ENCODE measurements at regions of chr19 and their contacts with region 1.

Region 1: GRCh38 chr19:14432791-14433553 is at the start of gene PKN1:
- DNase-seq: peak; percentile 38 to 66
- H3K4me3 ChIP-seq: peak within 1 kb of the TSS; percentile 93
- H3K27ac ChIP-seq: peak within 1 kb of the TSS; percentile 51
- H3K4me1 ChIP-seq: peaks cover 24% of the 10 kb centered on the region
- H3K27me3 ChIP-seq: no peaks in the 10 kb centered on the region; the same call in 1 of the 2 replicates
- CTCF ChIP-seq: no peak
- total RNA-seq, gene PKN1: 257 and 417 TPM in 2 replicates

Region 2: GRCh38 chr19:14556662-14557188 is 123.8 kb after region 1 on chr19:
- CTCF ChIA-PET with region 1: no interaction called
- POLR2A ChIA-PET with region 1: no interaction called
- intact Hi-C with region 1: loop called (anchors 5 kb)
- DNase-seq: peak; percentile 59 to 77
- H3K4me3 ChIP-seq: no peak overlapping the region
- H3K27ac ChIP-seq: 0 out of 2 replicates have a peak overlapping the region, but pooled peaks have one; percentile 1
- H3K4me1 ChIP-seq: 0 out of 2 replicates have a peak, but pooled peaks cover 6% of the 10 kb centered on the region
- H3K27me3 ChIP-seq: no peaks in the 10 kb centered on the region
- CTCF ChIP-seq: peak; percentile 97